ENCODE measurements at regions of chr17 and their contacts with region 1.

Region 1: DNA sequence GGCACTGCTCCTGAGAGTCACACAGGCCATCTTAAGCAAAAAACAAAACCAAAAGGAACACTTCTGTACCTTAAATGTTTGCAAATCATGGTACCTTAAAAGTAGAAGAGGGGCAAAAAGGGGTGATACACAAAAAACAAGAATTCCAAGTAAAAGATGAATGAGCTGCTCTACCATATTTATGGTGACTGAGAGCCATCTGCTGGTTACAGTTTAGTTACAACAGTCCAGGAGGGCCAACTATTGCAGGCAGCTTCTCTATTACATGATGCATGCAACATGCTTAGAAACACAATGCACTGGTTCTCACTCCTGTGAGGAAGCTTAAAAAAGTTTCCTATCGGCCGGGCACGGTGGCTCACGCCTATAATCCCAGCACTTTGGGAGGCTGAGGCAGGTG is 53.5 kb downstream of the STX8 start:
- DNase-seq: peak; percentile 48
- H3K4me3 Mint-ChIP-seq: no peak overlapping the region
- H3K27ac Mint-ChIP-seq: no peak overlapping the region
- H3K4me1 Mint-ChIP-seq: no peaks in the 10 kb centered on the region
- H3K27me3 Mint-ChIP-seq: no peaks in the 10 kb centered on the region
- CTCF ChIP-seq: peak; percentile 67

Region 2: GRCh38 chr17:8753976-8754440 is 768.1 kb before region 1 on chr17:
- CTCF ChIA-PET with region 1: interaction called, 4 read pairs
- POLR2A ChIA-PET with region 1: no interaction called
- intact Hi-C with region 1: loop called (anchors 5 kb)
- DNase-seq: peak; percentile 36
- H3K4me3 Mint-ChIP-seq: no peak overlapping the region
- H3K27ac Mint-ChIP-seq: no peak overlapping the region
- H3K4me1 Mint-ChIP-seq: no peaks in the 10 kb centered on the region
- H3K27me3 Mint-ChIP-seq: peaks cover 60% of the 10 kb centered on the region
- CTCF ChIP-seq: peak; percentile 22

Region 3: DNA sequence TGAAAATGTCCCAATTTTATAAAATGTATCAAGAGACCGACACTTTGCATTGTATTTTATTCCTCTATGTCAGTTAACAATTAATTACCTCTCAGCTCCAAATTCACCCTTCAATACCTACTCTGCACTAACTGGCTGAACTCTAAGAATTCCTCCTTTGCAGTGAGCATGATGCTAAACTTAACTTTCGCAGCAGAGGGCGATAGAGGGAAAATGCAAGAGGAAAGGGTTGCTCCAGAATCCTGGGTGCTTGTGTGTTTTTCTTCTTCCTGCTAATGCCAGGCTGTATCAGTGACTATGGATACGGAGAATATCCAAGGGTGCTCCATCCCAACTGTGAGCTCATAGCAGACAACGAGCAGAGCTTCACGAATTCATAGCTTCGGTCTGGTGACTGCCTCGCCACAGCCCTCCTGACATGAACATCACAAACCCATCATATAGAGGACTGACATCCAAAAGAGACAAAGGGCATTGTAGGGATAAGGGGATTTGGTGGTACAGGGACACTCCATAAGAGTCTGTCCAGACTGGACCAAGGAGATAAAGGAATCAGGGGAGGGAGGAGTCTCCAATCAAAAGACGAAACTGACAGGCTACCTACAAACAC is 119.4 kb before region 1 on chr17:
- CTCF ChIA-PET with region 1: no interaction called
- POLR2A ChIA-PET with region 1: no interaction called
- intact Hi-C with region 1: loop called (anchors 1 kb)
- DNase-seq: peak; percentile 61
- H3K4me3 Mint-ChIP-seq: no peak overlapping the region
- H3K27ac Mint-ChIP-seq: no peak overlapping the region
- H3K4me1 Mint-ChIP-seq: peaks cover 6% of the 10 kb centered on the region
- H3K27me3 Mint-ChIP-seq: no peaks in the 10 kb centered on the region
- CTCF ChIP-seq: peak; percentile 34

Measured in MCF 10A (cell line).